BJ (cell line): ENCODE measurements at regions of chr14 and their contacts with region 1.

Region 1: DNA sequence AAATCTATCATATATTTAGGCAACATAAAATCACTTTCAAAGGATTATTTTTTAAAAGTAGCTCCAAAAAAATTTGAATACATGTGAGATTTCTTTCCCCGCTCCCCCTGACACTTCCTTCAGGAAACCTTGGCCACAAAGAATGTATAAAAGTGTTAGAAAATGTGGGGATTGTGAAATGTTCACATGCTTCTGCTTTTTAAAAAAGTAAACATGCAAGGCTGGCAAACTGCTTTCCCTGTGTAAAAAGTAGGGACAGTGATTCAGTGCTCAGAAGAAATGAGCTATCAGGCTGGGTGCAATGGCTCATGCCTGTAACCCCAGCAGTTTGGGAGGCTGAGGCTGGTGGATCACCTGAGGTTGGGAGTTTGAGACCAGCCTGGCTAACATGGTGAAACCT is 26.6 kb downstream of the MBIP start:
- DNase-seq: peak; percentile 41
- H3K4me3 ChIP-seq: no peak overlapping the region
- H3K27me3 ChIP-seq: no peaks in the 10 kb centered on the region
- CTCF ChIP-seq: no peak

Region 2: GRCh38 chr14:36207500-36207899 is 86.3 kb before region 1 on chr14:
- CTCF ChIA-PET with region 1: no interaction called
- POLR2A ChIA-PET with region 1: no interaction called
- DNase-seq: no peak
- H3K4me3 ChIP-seq: no peak overlapping the region
- H3K27me3 ChIP-seq: no peaks in the 10 kb centered on the region
- CTCF ChIP-seq: peak; percentile 18; the same call in 1 of the 2 replicates

Region 3: DNA sequence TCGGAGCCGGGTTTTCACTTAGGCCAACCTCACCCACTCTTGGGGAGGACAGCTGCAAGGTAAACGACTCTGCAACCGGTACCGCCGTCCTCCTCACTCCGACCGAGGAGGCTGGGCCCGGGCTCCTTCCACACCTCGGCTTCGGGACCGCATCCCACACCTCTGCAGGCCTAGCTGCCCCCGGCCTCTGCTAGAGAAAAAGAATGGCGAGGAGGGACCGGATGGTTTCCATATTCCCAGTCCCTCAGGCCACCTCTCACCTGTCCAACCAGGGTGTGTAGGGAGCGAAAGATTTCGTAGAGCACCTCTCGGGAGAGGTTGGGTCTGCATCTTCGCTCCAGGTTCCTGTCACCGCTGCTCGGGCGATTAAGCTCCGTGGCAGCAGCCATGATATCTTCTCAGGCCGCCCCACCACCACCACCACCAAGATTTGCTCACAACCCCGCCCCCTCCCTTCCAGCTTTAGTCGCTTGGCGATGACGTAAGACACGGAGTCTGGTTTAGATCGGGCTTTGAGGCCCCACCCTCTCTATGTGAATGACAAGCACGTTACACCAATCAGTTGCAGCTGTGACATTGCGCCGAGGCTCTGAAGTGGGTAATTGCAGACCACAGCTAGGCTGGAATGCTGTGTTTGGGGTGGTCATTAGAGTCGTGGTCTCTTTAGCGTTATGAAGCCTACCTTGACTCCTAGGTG is 26.5 kb after region 1 on chr14 and contains the start of gene MBIP:
- CTCF ChIA-PET with region 1: no interaction called
- POLR2A ChIA-PET with region 1: interaction called, 15 read pairs
- DNase-seq: peak; percentile 69
- H3K4me3 ChIP-seq: peak within 1 kb of the TSS; percentile 83
- H3K27me3 ChIP-seq: 0 out of 2 replicates have a peak, but pooled peaks cover 3% of the 10 kb centered on the region
- CTCF ChIP-seq: no peak
- polyA plus RNA-seq, gene MBIP: 10.7 and 20.8 TPM in 2 replicates